Activated T-helper 2 cell treated with anti-CD3 and anti-CD28 coated beads, Interferon-gamma antibody, Interleukin-2, Interleukin-4, amounts not matched to agents 10 μg/mL and 5 μg/mL and 100 μg/mL, durations not matched to agents 14 hours and 24 hours and 36 hours (primary cell): ENCODE measurements at regions of chr7 and their contacts with region 1.

Region 1: GRCh38 chr7:100126931-100127865 is at the start of gene MBLAC1:
- DNase-seq: peak; percentile 88
- H3K4me3 Mint-ChIP-seq: peak within 1 kb of the TSS; percentile 99
- H3K27ac Mint-ChIP-seq: peak within 1 kb of the TSS; percentile 100
- H3K4me1 Mint-ChIP-seq: peaks cover 24% of the 10 kb centered on the region
- H3K27me3 Mint-ChIP-seq: no peaks in the 10 kb centered on the region
- total RNA-seq, gene MBLAC1: 2.8 and 2.9 TPM in 2 replicates

Region 2: GRCh38 chr7:99918959-99919813 is 208.0 kb before region 1 on chr7 and contains the start of gene TRIM4:
- intact Hi-C with region 1: loop called (anchors 10 kb)
- DNase-seq: peak; percentile 90
- H3K4me3 Mint-ChIP-seq: peak within 1 kb of the TSS; percentile 96
- H3K27ac Mint-ChIP-seq: peak within 1 kb of the TSS; percentile 94
- H3K4me1 Mint-ChIP-seq: peaks cover 29% of the 10 kb centered on the region
- H3K27me3 Mint-ChIP-seq: no peaks in the 10 kb centered on the region
- total RNA-seq, gene TRIM4: 21.8 and 23.2 TPM in 2 replicates

Region 3: GRCh38 chr7:100088621-100089457 is 38.4 kb before region 1 on chr7 and contains the start of gene COPS6:
- intact Hi-C with region 1: loop called (anchors 2 kb)
- DNase-seq: peak; percentile 84
- H3K4me3 Mint-ChIP-seq: peak within 1 kb of the TSS; percentile 87
- H3K27ac Mint-ChIP-seq: peak within 1 kb of the TSS; percentile 89
- H3K4me1 Mint-ChIP-seq: peaks cover 18% of the 10 kb centered on the region
- H3K27me3 Mint-ChIP-seq: peaks cover 2% of the 10 kb centered on the region
- total RNA-seq, gene COPS6: 116 and 119 TPM in 2 replicates

Region 4: DNA sequence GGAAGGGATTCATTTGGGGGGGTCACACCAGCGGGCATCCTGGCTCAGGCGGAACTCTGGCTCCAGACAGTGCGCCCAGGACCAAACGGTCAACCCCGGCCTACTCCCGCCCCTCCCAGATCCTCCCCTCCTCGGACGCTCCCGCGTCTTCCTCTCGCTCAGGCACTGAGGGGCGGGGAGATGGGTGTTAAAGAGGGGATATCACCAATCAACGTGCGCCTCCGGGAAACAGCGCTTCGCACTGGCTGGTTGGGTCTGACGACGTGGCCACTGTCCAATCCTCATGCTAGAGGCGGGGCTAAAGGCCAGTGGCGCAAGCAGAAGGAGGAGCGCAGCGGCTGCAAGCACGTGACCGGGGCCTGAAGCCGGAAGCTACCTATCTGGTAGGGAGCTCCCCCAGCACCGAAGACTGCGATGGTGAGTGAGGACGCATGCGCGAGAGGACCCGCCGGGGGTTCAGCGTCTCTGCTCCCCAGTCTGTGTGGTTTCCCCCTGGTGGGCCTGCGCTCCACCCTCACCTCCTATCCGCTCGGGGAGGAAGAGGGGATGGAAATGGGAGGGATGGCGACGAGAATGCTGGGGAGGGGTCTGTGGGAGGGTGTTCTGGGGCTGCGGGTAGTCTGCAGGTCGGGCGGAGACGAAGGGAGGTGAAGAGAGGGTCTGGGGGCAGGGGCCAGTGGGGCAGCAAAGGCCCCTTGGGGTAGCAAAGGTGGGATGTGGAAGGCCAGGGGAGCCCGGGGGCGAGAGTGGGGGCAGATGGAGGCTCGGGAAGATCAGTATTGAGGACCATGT is 21.6 kb after region 1 on chr7 and contains the start of gene LAMTOR4:
- intact Hi-C with region 1: no loop called
- DNase-seq: peak; percentile 99
- H3K4me3 Mint-ChIP-seq: peak within 1 kb of the TSS; percentile 96
- H3K27ac Mint-ChIP-seq: peak within 1 kb of the TSS; percentile 95
- H3K4me1 Mint-ChIP-seq: peaks cover 21% of the 10 kb centered on the region
- H3K27me3 Mint-ChIP-seq: no peaks in the 10 kb centered on the region
- total RNA-seq, gene LAMTOR4: 125 and 130 TPM in 2 replicates